Activated naive CD4-positive, alpha-beta T cell treated with anti-CD3 and anti-CD28 coated beads, Interleukin-2, amount 10 ng/mL, durations not matched to agents 7 days and 5 days (primary cell): ENCODE measurements at regions of chr2 and their contacts with region 1.

Region 1: DNA sequence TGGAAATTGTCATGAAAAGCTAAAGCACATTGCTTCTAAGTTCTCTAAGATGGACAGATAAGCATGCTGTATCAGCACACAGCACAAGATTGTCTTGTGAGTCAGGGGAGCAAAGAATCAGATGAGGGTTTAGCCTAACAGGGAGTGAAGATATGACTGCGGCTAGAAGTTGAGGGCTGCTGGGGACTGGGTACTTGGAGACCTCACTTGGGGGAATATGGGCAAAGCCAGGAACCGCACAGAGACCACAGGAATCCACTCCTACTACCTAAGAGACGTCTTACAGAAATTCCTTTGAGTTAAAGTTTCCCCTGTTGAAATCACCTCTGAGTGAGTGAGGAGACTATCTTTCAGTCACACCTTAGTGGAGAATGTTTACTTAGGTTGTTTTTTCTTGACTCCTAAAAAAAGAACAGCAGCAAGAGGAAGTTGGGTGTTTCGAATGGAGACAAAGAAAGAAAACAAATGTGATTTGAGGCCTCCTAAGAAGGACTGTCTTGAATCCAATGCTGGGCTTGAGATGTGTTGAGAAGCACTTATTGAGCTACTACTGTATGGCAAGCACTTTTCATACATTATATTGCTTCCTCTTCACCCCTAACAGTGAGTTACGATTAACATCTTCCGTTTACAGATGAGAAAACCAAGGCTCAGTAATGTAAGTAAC is 100.7 kb downstream of the ANKRD44 start:
- DNase-seq: peak; percentile 58
- H3K4me3 Mint-ChIP-seq: peak overlapping the region; percentile 44
- H3K27ac Mint-ChIP-seq: peak overlapping the region; percentile 97
- H3K4me1 Mint-ChIP-seq: peaks cover 98% of the 10 kb centered on the region
- H3K27me3 Mint-ChIP-seq: no peaks in the 10 kb centered on the region

Region 2: GRCh38 chr2:196914867-196915460 is 294.9 kb before region 1 on chr2:
- CTCF ChIA-PET with region 1: no interaction called
- DNase-seq: peak; percentile 41
- H3K4me3 Mint-ChIP-seq: peak overlapping the region; percentile 36
- H3K27ac Mint-ChIP-seq: peak overlapping the region; percentile 92
- H3K4me1 Mint-ChIP-seq: peaks cover 47% of the 10 kb centered on the region
- H3K27me3 Mint-ChIP-seq: no peaks in the 10 kb centered on the region

Region 3: DNA sequence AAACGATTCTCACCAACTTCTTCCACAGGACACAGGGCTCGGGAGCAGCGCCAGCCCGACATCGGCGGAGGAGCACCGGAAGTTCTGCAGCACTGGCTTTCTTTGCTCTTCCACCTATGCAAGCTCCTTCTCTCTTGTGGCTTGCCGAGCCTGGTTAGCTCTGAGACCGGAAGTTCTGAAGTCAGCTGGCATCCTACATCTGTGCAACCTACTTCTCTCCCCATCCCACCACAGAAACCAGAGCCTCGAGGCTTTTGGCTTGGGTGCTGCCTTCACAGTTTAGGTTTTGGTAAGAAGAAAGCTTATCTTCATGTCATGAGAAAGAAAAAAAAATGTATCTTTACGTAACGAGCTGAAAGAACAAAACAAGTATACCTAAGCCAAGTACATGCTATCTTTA is 11.0 kb before region 1 on chr2:
- CTCF ChIA-PET with region 1: interaction called, 14 read pairs
- DNase-seq: peak; percentile 95
- H3K4me3 Mint-ChIP-seq: peak overlapping the region; percentile 81
- H3K27ac Mint-ChIP-seq: peak overlapping the region; percentile 96
- H3K4me1 Mint-ChIP-seq: peaks cover 95% of the 10 kb centered on the region
- H3K27me3 Mint-ChIP-seq: no peaks in the 10 kb centered on the region